Gastrocnemius medialis (tissue), 4 donors: ENCODE measurements at regions of chr10 and their contacts with region 1.

Region 1: DNA sequence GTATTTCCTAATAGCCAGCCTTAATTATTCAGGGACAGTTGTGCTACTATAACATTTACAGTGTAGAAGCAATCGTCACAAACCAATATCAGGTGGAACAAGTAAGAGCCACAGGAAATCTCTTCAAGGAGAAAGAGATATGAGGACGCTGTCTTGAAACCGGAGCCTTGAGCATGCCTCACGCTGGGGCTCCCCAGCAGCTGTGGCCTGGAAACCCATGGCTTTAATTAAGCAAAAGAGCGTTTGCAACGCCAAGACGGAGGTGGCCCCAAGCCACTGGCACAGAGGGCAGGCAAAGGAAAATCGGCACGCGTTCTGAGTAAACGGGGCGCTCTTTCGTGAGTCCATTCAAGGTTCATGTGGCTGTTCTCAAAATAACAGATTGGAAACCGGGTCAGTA is 84.4 kb downstream of the C10orf90 start:
- DNase-seq: no peak
- ATAC-seq: no peak
- H3K4me3 ChIP-seq: no peak overlapping the region
- H3K27ac ChIP-seq: no peak overlapping the region
- H3K4me1 ChIP-seq: no peaks in the 10 kb centered on the region
- H3K27me3 ChIP-seq: no peaks in the 10 kb centered on the region
- CTCF ChIP-seq: no peak
- POLR2A ChIP-seq: no peak

Region 2: GRCh38 chr10:126565871-126566270 is 20.3 kb before region 1 on chr10:
- in situ Hi-C with region 1: no loop called
- intact Hi-C with region 1: loop called (anchors 1 kb)
- DNase-seq: no peak
- ATAC-seq: no peak
- H3K4me3 ChIP-seq: no peak overlapping the region
- H3K27ac ChIP-seq: no peak overlapping the region
- H3K4me1 ChIP-seq: peaks cover 0 to 10% of the 10 kb centered on the region in 2 donors
- H3K27me3 ChIP-seq: no peaks in the 10 kb centered on the region
- CTCF ChIP-seq: no peak
- POLR2A ChIP-seq: no peak